ENCODE measurements at regions of chr10 and their contacts with region 1.

Region 1: DNA sequence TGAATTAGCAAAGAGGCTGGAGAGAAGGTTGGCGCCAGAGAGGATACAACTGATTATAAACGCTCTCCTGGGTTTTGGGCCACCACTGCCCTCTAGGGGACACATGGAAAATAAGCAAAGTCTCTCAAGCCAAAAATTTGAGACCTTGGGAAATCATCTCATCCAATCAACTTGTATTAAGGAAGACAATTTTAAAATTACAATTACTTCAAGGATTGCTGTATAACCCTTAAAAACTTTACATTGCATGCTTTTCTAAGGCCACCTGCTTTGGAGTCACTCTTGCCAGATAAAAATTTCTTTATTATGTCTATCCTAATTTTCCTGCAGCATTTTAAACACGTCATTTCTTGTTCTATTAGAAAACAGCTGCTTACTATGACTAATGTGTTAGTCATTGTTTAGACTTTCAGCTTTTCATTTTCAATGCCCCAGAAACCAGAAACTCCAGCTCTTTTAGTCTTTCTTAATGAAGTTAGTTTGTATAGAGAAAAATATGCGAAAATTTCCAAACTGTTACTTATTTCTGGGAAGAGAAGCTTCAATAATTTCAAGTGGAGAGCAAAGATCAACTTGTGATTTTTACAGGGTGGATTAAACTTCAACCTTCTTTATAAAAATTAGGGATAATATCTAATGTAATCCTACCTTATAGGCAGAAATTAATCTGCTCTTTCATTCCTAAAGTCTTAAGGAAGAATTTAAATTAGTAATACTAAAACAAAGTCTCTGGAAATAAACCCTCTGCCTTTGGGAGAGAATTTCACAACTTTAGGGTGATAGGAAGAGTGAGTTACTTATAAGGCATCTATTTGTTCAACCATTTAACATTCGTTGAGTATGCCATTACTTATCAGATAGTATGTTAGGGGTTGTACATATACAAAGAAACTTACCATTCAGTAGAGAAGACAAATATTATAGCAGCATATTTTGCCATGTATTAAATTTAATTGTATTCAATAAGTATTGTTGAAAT is 20.6 kb upstream of the RHOBTB1 start:
- DNase-seq: peak; percentile 91
- ATAC-seq: peak; percentile 76
- H3K4me3 ChIP-seq: no peak overlapping the region
- H3K27ac ChIP-seq: peak overlapping the region; percentile 49; the same call in 1 of the 2 replicates
- H3K4me1 ChIP-seq: peaks cover 4% of the 10 kb centered on the region; the same call in 1 of the 2 replicates
- H3K27me3 ChIP-seq: no peaks in the 10 kb centered on the region
- CTCF ChIP-seq: peak; percentile 88
- POLR2A ChIP-seq: no peak
- RAD21 ChIP-seq: peak; percentile 78

Region 2: GRCh38 chr10:60444494-60445064 is 520.0 kb before region 1 on chr10:
- CTCF ChIA-PET with region 1: no interaction called
- POLR2A ChIA-PET with region 1: no interaction called
- dilution Hi-C with region 1: no loop called
- in situ Hi-C with region 1: no loop called
- intact Hi-C with region 1: loop called (anchors 5 kb)
- DNase-seq: peak; percentile 63
- ATAC-seq: peak; percentile 65
- H3K4me3 ChIP-seq: no peak overlapping the region
- H3K27ac ChIP-seq: no peak overlapping the region
- H3K4me1 ChIP-seq: peaks cover 3% of the 10 kb centered on the region; the same call in 1 of the 2 replicates
- H3K27me3 ChIP-seq: no peaks in the 10 kb centered on the region; the same call in 1 of the 2 replicates
- CTCF ChIP-seq: peak; percentile 72
- POLR2A ChIP-seq: no peak
- RAD21 ChIP-seq: peak; percentile 70

Region 3: GRCh38 chr10:60896033-60896432 is 68.5 kb before region 1 on chr10:
- CTCF ChIA-PET with region 1: no interaction called
- POLR2A ChIA-PET with region 1: no interaction called
- dilution Hi-C with region 1: no loop called
- in situ Hi-C with region 1: no loop called
- intact Hi-C with region 1: loop called (anchors 5 kb)
- DNase-seq: peak; percentile 82
- ATAC-seq: peak; percentile 66
- H3K4me3 ChIP-seq: no peak overlapping the region
- H3K27ac ChIP-seq: no peak overlapping the region; the same call in 1 of the 2 replicates
- H3K4me1 ChIP-seq: peaks cover 3% of the 10 kb centered on the region
- H3K27me3 ChIP-seq: no peaks in the 10 kb centered on the region
- CTCF ChIP-seq: no peak
- POLR2A ChIP-seq: no peak
- RAD21 ChIP-seq: no peak

Region 4: DNA sequence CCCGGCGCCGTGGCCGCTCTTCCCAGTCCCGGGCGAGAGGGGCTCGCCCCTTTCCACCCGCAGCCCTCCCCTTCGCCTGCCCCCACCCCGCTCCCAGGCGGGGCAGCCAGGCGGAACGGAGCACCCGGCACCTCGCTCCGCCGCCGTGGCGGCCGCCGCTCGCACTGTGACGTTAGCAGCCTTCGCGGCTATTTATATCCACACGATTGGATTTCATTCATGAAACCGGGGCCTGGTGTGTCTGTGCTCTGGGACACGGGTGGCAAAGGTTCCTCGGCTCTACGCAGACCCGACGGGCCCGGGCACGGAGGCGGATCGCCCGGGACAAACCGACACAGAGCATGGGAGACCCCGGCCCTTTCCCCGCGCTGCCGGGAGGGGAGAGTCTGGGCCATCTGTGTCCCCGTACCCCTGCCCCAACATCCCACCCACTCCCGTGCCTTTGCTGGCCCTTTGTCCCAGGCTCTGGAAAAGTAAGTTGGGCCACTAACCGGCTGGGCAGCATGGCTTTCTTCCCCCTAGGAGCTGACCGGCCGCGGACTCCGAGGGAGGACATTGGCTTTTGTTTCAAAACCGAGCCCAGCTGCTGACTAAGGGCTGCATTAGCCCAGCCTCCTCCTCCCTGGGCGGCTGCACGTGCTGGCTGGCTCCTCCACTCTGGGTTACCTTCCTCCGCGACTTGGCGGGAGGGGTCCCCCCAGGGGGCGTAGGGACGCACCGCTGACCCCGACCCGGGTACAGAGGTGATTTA is 20.2 kb before region 1 on chr10 and contains the start of gene RHOBTB1:
- CTCF ChIA-PET with region 1: no interaction called
- POLR2A ChIA-PET with region 1: interaction called, 3 read pairs
- dilution Hi-C with region 1: no loop called
- in situ Hi-C with region 1: no loop called
- intact Hi-C with region 1: loop called (anchors 2 kb)
- DNase-seq: peak; percentile 83
- ATAC-seq: peak; percentile 84
- H3K4me3 ChIP-seq: peak within 1 kb of the TSS; percentile 67
- H3K27ac ChIP-seq: peak within 1 kb of the TSS; percentile 92
- H3K4me1 ChIP-seq: peaks cover 2% of the 10 kb centered on the region; the same call in 1 of the 2 replicates
- H3K27me3 ChIP-seq: no peaks in the 10 kb centered on the region
- CTCF ChIP-seq: no peak
- POLR2A ChIP-seq: peak; percentile 90
- RAD21 ChIP-seq: no peak
- total RNA-seq, gene RHOBTB1: 15.2 and 18.9 TPM in 2 replicates

Region 5: GRCh38 chr10:61000769-61001730 is 36.5 kb after region 1 on chr10:
- CTCF ChIA-PET with region 1: no interaction called
- POLR2A ChIA-PET with region 1: no interaction called
- dilution Hi-C with region 1: no loop called
- in situ Hi-C with region 1: no loop called
- intact Hi-C with region 1: no loop called
- DNase-seq: peak; percentile 11
- ATAC-seq: peak; percentile 86
- H3K4me3 ChIP-seq: peak overlapping the region; percentile 52
- H3K27ac ChIP-seq: no peak overlapping the region
- H3K4me1 ChIP-seq: 0 out of 2 replicates have a peak, but pooled peaks cover 1% of the 10 kb centered on the region
- H3K27me3 ChIP-seq: peaks cover 9% of the 10 kb centered on the region
- CTCF ChIP-seq: no peak
- POLR2A ChIP-seq: no peak
- RAD21 ChIP-seq: no peak

Region 6: GRCh38 chr10:61284222-61284890 is 319.8 kb after region 1 on chr10:
- CTCF ChIA-PET with region 1: interaction called, 3 read pairs
- POLR2A ChIA-PET with region 1: no interaction called
- dilution Hi-C with region 1: no loop called
- in situ Hi-C with region 1: loop called (anchors 10 kb)
- intact Hi-C with region 1: loop called (anchors 1 kb)
- DNase-seq: peak; percentile 77
- ATAC-seq: peak; percentile 62
- H3K4me3 ChIP-seq: no peak overlapping the region
- H3K27ac ChIP-seq: no peak overlapping the region
- H3K4me1 ChIP-seq: no peaks in the 10 kb centered on the region
- H3K27me3 ChIP-seq: no peaks in the 10 kb centered on the region
- CTCF ChIP-seq: peak; percentile 78
- POLR2A ChIP-seq: no peak
- RAD21 ChIP-seq: peak; percentile 72